Activated CD4-positive, alpha-beta memory T cell treated with anti-CD3 and anti-CD28 coated beads, Interleukin-2, amount 10 ng/mL, durations not matched to agents 7 days and 5 days (primary cell): ENCODE measurements at regions of chr13 and their contacts with region 1.

Region 1: DNA sequence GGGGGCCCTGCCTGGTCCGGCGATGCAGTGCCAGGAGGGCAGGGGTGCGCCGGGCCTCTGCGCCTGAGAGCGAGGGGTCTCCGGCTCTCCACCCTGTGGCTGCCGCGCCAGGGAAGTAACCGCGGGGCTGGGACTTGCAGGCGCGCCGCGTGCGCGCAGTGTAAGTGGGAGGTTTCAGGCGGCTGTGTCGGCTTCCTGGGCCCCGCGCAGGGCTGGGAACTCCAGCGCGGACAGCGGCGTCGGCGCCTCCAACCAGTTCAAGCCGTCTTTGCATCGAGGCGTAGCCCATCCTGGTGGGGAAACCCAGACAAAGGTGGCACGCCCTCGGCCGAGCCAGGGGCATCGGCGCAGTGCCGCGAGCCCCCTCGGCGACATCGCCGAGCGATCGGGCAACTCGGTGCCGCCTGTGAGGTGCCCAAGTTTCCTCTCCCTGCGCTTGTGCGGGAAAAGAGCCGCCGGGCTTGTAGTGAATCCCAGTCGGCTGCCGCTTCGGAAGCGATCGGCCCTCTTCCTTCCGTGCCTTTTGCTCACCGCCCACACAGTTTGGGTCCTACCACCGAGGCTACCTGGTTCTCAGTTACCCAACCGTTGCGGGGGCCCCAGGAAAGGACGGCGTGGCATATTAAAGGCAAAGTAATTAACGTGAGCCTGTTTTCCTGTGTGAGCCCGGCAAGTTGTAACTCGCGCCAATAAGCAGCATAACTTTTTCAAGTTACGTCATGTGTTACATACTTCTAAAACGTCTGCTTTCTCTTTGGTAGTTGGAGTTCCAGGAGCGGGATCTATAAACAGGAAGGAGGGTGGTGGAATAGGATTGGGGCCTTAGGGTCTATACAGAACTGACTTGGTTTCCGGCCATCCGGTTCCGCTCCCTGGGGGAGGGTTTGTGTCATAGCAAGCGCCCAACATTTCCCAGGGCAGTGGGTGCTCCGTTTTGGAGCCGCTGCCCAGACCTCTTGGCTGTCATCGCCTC is 1.2 kb downstream of the LRCH1 start:
- DNase-seq: peak; percentile 68
- H3K4me3 Mint-ChIP-seq: peak overlapping the region; percentile 92
- H3K27ac Mint-ChIP-seq: peak overlapping the region; percentile 75
- H3K4me1 Mint-ChIP-seq: peaks cover 45% of the 10 kb centered on the region
- H3K27me3 Mint-ChIP-seq: peaks cover under 1% of the 10 kb centered on the region

Region 2: GRCh38 chr13:46487748-46488147 is 66.4 kb before region 1 on chr13:
- CTCF ChIA-PET with region 1: no interaction called
- POLR2A ChIA-PET with region 1: no interaction called
- DNase-seq: no peak
- H3K4me3 Mint-ChIP-seq: no peak overlapping the region
- H3K27ac Mint-ChIP-seq: no peak overlapping the region
- H3K4me1 Mint-ChIP-seq: peaks cover 5% of the 10 kb centered on the region
- H3K27me3 Mint-ChIP-seq: peaks cover 10% of the 10 kb centered on the region

Region 3: GRCh38 chr13:46530084-46530935 is 23.9 kb before region 1 on chr13:
- CTCF ChIA-PET with region 1: interaction called, 16 read pairs
- POLR2A ChIA-PET with region 1: no interaction called
- DNase-seq: no peak
- H3K4me3 Mint-ChIP-seq: no peak overlapping the region
- H3K27ac Mint-ChIP-seq: no peak overlapping the region
- H3K4me1 Mint-ChIP-seq: peaks cover 18% of the 10 kb centered on the region
- H3K27me3 Mint-ChIP-seq: peaks cover 8% of the 10 kb centered on the region

Region 4: GRCh38 chr13:46542833-46543232 is 11.3 kb before region 1 on chr13:
- CTCF ChIA-PET with region 1: interaction called, 17 read pairs
- POLR2A ChIA-PET with region 1: interaction called, 3 read pairs
- DNase-seq: no peak
- H3K4me3 Mint-ChIP-seq: no peak overlapping the region
- H3K27ac Mint-ChIP-seq: no peak overlapping the region
- H3K4me1 Mint-ChIP-seq: no peaks in the 10 kb centered on the region
- H3K27me3 Mint-ChIP-seq: peaks cover 5% of the 10 kb centered on the region

Region 5: GRCh38 chr13:46565808-46566750 is 11.9 kb after region 1 on chr13:
- CTCF ChIA-PET with region 1: interaction called, 12 read pairs
- POLR2A ChIA-PET with region 1: no interaction called
- DNase-seq: no peak
- H3K4me3 Mint-ChIP-seq: no peak overlapping the region
- H3K27ac Mint-ChIP-seq: no peak overlapping the region
- H3K4me1 Mint-ChIP-seq: peaks cover 5% of the 10 kb centered on the region
- H3K27me3 Mint-ChIP-seq: no peaks in the 10 kb centered on the region

Region 6: GRCh38 chr13:46721054-46721453 is 166.9 kb after region 1 on chr13:
- CTCF ChIA-PET with region 1: interaction called, 67 read pairs
- POLR2A ChIA-PET with region 1: interaction called, 6 read pairs
- DNase-seq: peak; percentile 43
- H3K4me3 Mint-ChIP-seq: no peak overlapping the region
- H3K27ac Mint-ChIP-seq: no peak overlapping the region
- H3K4me1 Mint-ChIP-seq: peaks cover 4% of the 10 kb centered on the region
- H3K27me3 Mint-ChIP-seq: no peaks in the 10 kb centered on the region

Region 7: GRCh38 chr13:46751811-46752635 is 197.9 kb after region 1 on chr13:
- CTCF ChIA-PET with region 1: interaction called, 10 read pairs
- POLR2A ChIA-PET with region 1: interaction called, 4 read pairs
- DNase-seq: peak; percentile 80
- H3K4me3 Mint-ChIP-seq: peak overlapping the region; percentile 38
- H3K27ac Mint-ChIP-seq: peak overlapping the region; percentile 79
- H3K4me1 Mint-ChIP-seq: peaks cover 35% of the 10 kb centered on the region
- H3K27me3 Mint-ChIP-seq: no peaks in the 10 kb centered on the region

Region 8: GRCh38 chr13:46855166-46855565 is 301.0 kb after region 1 on chr13:
- CTCF ChIA-PET with region 1: no interaction called
- POLR2A ChIA-PET with region 1: no interaction called
- DNase-seq: no peak
- H3K4me3 Mint-ChIP-seq: no peak overlapping the region
- H3K27ac Mint-ChIP-seq: no peak overlapping the region
- H3K4me1 Mint-ChIP-seq: no peaks in the 10 kb centered on the region
- H3K27me3 Mint-ChIP-seq: peaks cover 10% of the 10 kb centered on the region